Activated T-helper 1 cell treated with anti-CD3 and anti-CD28 coated beads, Interleukin-12 subunit alpha, Interleukin-12 subunit beta, Interleukin-2, Interleukin-4 antibody, amounts not matched to agents 30 ng/mL and 10 ng/mL and 1 ng/mL, durations not matched to agents 14 hours and 24 hours and 36 hours (primary cell): ENCODE measurements at regions of chr11 and their contacts with region 1.

Region 1: GRCh38 chr11:22875869-22876473 is 15.7 kb upstream of the CCDC179 start:
- DNase-seq: peak; percentile 48
- H3K4me3 Mint-ChIP-seq: no peak overlapping the region
- H3K27ac Mint-ChIP-seq: no peak overlapping the region
- H3K4me1 Mint-ChIP-seq: no peaks in the 10 kb centered on the region
- H3K27me3 Mint-ChIP-seq: no peaks in the 10 kb centered on the region

Region 2: DNA sequence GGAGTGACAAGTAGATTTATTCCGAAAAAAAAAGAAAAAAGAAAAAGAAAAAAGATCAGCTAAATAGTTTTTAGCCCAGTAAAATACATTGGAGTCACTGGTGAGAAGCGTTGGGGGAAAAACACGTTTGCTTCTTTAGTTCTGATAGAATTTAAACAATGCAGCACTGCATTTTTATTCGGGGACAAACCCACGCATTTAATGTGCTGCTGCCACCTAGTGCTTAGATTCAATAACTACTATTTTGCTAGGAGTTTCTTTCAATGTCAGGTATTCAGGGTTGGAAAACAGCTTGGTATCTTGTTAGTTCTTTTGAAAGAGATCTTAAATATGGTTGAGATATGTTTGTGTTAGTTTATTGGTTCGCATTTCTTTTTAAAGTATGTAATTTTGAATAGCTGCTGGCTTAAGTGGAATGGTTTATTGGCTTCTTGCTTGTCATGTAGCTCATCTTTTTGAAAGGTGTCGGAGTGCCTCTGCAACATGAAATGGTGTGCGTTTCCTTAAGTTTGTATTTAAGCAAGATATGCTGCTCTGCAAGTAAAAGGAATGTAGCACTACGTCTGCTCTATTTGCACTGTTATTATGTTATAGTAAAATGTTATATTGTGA is 88.3 kb before region 1 on chr11:
- intact Hi-C with region 1: no loop called
- DNase-seq: no peak
- H3K4me3 Mint-ChIP-seq: no peak overlapping the region
- H3K27ac Mint-ChIP-seq: no peak overlapping the region
- H3K4me1 Mint-ChIP-seq: no peaks in the 10 kb centered on the region
- H3K27me3 Mint-ChIP-seq: no peaks in the 10 kb centered on the region

Region 3: DNA sequence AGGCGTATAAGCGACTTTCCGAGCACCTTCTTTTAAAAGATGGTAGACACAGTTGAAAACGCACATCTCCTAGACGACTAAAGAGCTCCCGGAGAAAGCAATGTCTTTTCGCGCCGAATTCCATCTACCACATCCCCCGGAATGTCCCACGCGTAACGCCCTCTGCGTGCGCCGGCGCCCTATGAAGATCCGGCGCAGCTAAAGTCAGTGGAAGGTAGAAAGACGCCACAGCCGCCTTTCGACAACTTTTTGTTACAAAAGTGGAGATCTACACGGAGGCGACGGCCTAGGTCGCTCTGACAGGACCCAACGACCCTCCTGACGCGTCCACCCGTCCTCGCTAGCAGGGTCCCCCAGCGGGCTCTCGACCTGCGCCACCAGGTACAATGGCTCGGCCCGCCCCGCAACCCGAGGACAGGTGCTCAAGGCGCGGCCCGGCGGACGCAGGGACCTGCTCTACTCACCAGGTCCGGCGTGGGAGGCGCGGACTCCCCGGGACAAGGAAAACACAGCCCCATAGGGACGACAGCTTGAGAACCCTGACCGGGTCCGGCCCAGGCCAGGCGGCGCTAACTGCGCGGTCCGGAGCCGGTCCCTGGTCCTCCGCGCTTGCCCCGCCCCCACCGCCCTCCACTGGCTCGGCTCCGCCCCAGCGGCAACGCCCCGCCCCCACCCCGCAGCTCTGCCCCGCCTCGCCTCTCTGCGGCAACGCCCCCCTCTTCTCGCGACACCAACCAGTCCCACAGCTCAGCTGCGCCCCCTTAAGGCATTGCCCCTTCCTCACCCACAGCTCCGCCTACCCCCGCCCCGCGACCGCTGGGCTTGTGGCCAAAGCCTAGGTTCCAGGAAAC is 46.5 kb before region 1 on chr11 and contains the start of gene SVIP:
- intact Hi-C with region 1: loop called (anchors 2 kb)
- DNase-seq: peak; percentile 88
- H3K4me3 Mint-ChIP-seq: peak within 1 kb of the TSS; percentile 94
- H3K27ac Mint-ChIP-seq: peak within 1 kb of the TSS; percentile 88
- H3K4me1 Mint-ChIP-seq: peaks cover 14% of the 10 kb centered on the region
- H3K27me3 Mint-ChIP-seq: no peaks in the 10 kb centered on the region
- total RNA-seq, gene SVIP: 45.1 and 47.5 TPM in 2 replicates

Region 4: GRCh38 chr11:23112987-23113886 is 237.3 kb after region 1 on chr11:
- intact Hi-C with region 1: loop called (anchors 10 kb)
- DNase-seq: no peak
- H3K4me3 Mint-ChIP-seq: no peak overlapping the region
- H3K27ac Mint-ChIP-seq: no peak overlapping the region
- H3K4me1 Mint-ChIP-seq: no peaks in the 10 kb centered on the region
- H3K27me3 Mint-ChIP-seq: peaks cover 4% of the 10 kb centered on the region

Region 5: GRCh38 chr11:23540101-23540561 is 664.2 kb after region 1 on chr11:
- intact Hi-C with region 1: loop called (anchors 10 kb)
- DNase-seq: no peak
- H3K4me3 Mint-ChIP-seq: no peak overlapping the region
- H3K27ac Mint-ChIP-seq: no peak overlapping the region
- H3K4me1 Mint-ChIP-seq: no peaks in the 10 kb centered on the region
- H3K27me3 Mint-ChIP-seq: no peaks in the 10 kb centered on the region

Region 6: GRCh38 chr11:23789938-23790371 is 914.0 kb after region 1 on chr11:
- intact Hi-C with region 1: no loop called
- DNase-seq: no peak
- H3K4me3 Mint-ChIP-seq: no peak overlapping the region
- H3K27ac Mint-ChIP-seq: no peak overlapping the region
- H3K4me1 Mint-ChIP-seq: no peaks in the 10 kb centered on the region
- H3K27me3 Mint-ChIP-seq: no peaks in the 10 kb centered on the region